Aorta (tissue), 5 donors: ENCODE measurements at regions of chrX and their contacts with region 1.

Region 1: DNA sequence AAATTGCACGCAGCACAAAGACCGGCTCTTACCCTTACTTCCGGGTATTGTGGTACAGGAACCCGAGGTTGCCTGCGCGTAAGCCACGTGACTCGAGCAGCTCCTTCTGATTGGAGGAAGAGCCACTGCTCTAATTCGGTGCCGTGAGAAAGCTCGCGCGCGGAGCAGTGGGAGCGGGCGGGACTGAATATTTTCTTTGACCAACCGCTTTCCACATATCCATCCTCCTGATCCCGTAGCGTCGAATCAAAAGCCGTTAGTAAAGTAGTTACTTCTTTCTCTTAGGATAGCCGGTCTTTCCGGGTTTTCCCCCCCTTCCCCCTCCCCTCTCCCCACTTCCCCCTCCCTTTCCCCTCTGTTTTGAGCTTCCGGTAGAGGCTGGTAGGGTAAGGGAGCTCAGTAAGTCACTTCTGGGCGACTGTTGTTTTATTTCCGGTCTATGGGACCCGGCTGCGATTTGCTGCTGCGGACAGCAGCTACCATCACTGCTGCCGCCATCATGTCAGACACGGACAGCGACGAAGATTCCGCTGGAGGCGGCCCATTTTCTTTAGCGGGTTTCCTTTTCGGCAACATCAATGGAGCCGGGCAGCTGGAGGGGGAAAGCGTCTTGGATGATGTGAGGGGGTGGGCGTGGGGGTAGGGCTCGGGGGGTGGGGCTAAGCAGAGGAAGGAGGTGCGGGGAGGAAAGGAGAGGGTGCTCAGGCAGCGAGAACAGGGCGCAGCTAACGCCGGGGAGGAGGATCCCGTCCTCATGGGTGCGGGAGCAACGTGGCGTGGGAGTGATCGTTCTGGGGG is at the start of gene TAF1:
- DNase-seq: peak; percentile 95 to 97
- ATAC-seq: peak; percentile 94
- H3K4me3 ChIP-seq: peak within 1 kb of the TSS; percentile 39 to 90
- H3K27ac ChIP-seq: peak within 1 kb of the TSS in 1 of 2 donors; percentile 93
- H3K4me1 ChIP-seq: no peaks in the 10 kb centered on the region
- H3K27me3 ChIP-seq: no peaks in the 10 kb centered on the region
- total RNA-seq, gene TAF1: 45.0 to 58.5 TPM

Region 2: GRCh38 chrX:71254092-71254941 is 111.8 kb before region 1 on chrX and contains the start of gene ZMYM3:
- intact Hi-C with region 1: loop called in 1 of 2 experiments (anchors 10 kb)
- DNase-seq: peak; percentile 92 to 94
- ATAC-seq: peak; percentile 95
- H3K4me3 ChIP-seq: peak within 1 kb of the TSS; percentile 41 to 70
- H3K27ac ChIP-seq: peak within 1 kb of the TSS in 1 of 2 donors; percentile 73
- H3K4me1 ChIP-seq: no peaks in the 10 kb centered on the region
- H3K27me3 ChIP-seq: no peaks in the 10 kb centered on the region
- total RNA-seq, gene ZMYM3: 14.5 to 26.0 TPM